WTC11 (cell line): ENCODE measurements at regions of chr17 and their contacts with region 1.

Region 1: DNA sequence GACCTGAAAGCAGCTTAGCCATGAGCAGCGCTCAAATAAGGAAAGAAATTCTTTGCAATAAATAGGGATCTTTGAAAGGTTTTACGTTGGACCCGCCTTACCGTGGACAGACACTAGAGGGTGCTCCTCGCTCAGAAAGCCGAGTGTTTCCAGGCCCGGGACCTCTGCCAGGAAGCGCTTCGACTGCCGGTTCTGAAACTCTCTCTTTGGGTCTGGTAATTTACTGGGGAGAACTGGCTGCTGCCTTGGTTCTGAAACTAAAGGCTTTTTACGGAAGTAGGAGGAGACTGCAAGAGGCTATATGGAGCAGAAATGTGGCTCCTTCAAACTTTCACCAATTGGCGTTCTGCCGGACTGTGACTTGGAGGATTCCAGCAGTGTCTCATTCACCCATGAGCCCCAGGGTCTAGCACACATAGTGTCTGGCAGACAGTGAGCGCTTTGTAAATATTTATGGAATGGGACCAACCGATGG is 45.6 kb upstream of the HOXB9 start:
- DNase-seq: peak; percentile 87
- ATAC-seq: peak; percentile 96
- H3K4me3 Mint-ChIP-seq: peak overlapping the region; percentile 72
- H3K27ac Mint-ChIP-seq: no peak overlapping the region
- H3K4me1 Mint-ChIP-seq: peaks cover 12% of the 10 kb centered on the region
- H3K27me3 Mint-ChIP-seq: peaks cover 53% of the 10 kb centered on the region
- CTCF ChIP-seq: peak; percentile 79

Region 2: DNA sequence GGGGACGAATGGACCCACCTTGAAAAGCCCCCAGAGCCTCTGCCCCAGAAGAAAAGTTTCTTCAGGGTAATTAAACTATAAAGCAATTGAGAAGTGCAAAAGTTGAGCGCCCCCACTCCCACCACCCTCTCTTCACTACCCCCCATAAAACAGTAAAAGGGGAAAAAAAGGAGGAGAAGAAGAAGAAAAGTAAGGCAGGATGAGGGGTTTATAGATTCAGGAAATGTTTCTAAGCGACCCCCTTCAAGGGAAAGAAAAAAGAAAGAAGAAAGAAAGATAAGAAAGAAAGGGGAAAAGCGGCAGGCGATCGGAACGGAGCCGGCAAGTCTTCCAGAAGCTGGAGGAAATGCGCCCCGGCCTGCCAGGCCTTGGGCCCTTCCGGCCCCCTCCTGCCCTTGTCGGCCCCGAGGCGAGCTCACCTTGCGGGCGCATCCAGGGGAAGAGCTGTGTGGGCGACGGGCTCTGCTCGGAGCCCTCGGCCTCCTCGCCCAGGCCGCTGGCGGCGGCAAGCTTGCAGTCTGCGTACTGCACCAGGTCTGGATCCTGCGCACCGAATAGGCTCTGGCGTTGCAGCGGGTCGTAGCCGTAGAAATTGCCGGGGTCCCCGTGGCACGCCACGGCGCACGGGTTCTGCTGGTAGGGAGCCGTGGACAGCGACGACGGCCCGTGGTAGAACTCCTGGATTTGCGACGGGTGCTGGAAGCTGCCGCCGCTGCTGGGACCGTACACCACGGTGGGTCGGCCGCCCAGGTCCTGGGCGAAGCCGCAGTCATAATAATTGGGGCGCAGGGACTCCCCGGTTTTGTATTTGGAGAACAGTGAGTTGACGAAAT is 57.7 kb before region 1 on chr17:
- CTCF ChIA-PET with region 1: no interaction called
- POLR2A ChIA-PET with region 1: no interaction called
- DNase-seq: no peak
- ATAC-seq: no peak
- H3K4me3 Mint-ChIP-seq: no peak overlapping the region; the same call in 1 of the 2 replicates
- H3K27ac Mint-ChIP-seq: no peak overlapping the region
- H3K4me1 Mint-ChIP-seq: peaks cover 38% of the 10 kb centered on the region
- H3K27me3 Mint-ChIP-seq: peaks cover 100% of the 10 kb centered on the region; the same call in 1 of the 2 replicates
- CTCF ChIP-seq: no peak

Region 3: GRCh38 chr17:48767263-48767774 is 95.6 kb after region 1 on chr17:
- CTCF ChIA-PET with region 1: interaction called, 12 read pairs
- POLR2A ChIA-PET with region 1: no interaction called
- DNase-seq: no peak
- ATAC-seq: peak; percentile 72
- H3K4me3 Mint-ChIP-seq: no peak overlapping the region
- H3K27ac Mint-ChIP-seq: no peak overlapping the region
- H3K4me1 Mint-ChIP-seq: no peaks in the 10 kb centered on the region
- H3K27me3 Mint-ChIP-seq: peaks cover 57% of the 10 kb centered on the region
- CTCF ChIP-seq: no peak